ENCODE measurements at regions of chr13 and their contacts with region 1.

Region 1: GRCh38 chr13:52162279-52163101 is 3.1 kb upstream of the NEK3 start:
- DNase-seq: peak; percentile 97
- ATAC-seq: peak; percentile 63
- H3K4me3 ChIP-seq: peak overlapping the region; percentile 8 to 23 (median 16); a peak in 4 of 6 replicates
- H3K27ac ChIP-seq: peak overlapping the region; percentile 91
- H3K4me1 ChIP-seq: peaks cover 78% of the 10 kb centered on the region
- H3K27me3 ChIP-seq: no peaks in the 10 kb centered on the region
- CTCF ChIP-seq: no peak
- EP300 ChIP-seq: peak in 1 of 2 experiments; percentile 84; a peak in 2 of 4 replicates
- POLR2A ChIP-seq: peak in 1 of 2 experiments; percentile 31; a peak in 1 of 4 replicates
- RAD21 ChIP-seq: no peak

Region 2: GRCh38 chr13:51911860-51912510 is 250.5 kb before region 1 on chr13:
- CTCF ChIA-PET with region 1: no interaction called
- POLR2A ChIA-PET with region 1: no interaction called
- in situ Hi-C with region 1: no loop called
- intact Hi-C with region 1: no loop called
- DNase-seq: no peak
- ATAC-seq: no peak
- H3K4me3 ChIP-seq: no peak overlapping the region
- H3K27ac ChIP-seq: no peak overlapping the region
- H3K4me1 ChIP-seq: peaks cover 6% of the 10 kb centered on the region
- H3K27me3 ChIP-seq: no peaks in the 10 kb centered on the region
- CTCF ChIP-seq: no peak
- EP300 ChIP-seq: no peak
- POLR2A ChIP-seq: no peak
- RAD21 ChIP-seq: no peak

Region 3: GRCh38 chr13:51978796-51979556 is 183.5 kb before region 1 on chr13:
- CTCF ChIA-PET with region 1: no interaction called
- POLR2A ChIA-PET with region 1: no interaction called
- in situ Hi-C with region 1: no loop called
- intact Hi-C with region 1: no loop called
- DNase-seq: peak; percentile 90
- ATAC-seq: peak; percentile 97
- H3K4me3 ChIP-seq: peak overlapping the region in 1 of 3 experiments; percentile 14; a peak in 1 of 6 replicates
- H3K27ac ChIP-seq: peak overlapping the region; percentile 55
- H3K4me1 ChIP-seq: peaks cover 75% of the 10 kb centered on the region
- H3K27me3 ChIP-seq: no peaks in the 10 kb centered on the region
- CTCF ChIP-seq: no peak
- EP300 ChIP-seq: peak in 1 of 2 experiments; percentile 42; a peak in 1 of 4 replicates
- POLR2A ChIP-seq: no peak
- RAD21 ChIP-seq: no peak

Region 4: DNA sequence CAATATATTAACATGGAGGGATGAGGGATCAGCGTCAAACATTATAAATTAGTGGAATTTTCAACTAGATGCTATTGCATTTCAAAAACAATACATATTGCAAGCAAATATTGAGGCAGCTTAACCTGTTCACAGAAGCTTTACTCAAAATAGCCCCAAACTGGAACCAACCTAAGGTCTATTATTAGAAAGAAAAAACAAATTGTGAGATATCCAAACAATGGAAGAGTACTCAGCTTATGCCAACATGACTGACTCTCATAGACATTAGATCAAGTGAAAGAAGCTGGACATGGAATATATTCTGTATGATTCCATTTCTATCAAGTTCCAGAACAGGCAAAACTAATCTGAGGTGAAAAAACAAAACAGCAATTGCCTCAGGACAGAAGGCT is 24.5 kb after region 1 on chr13:
- CTCF ChIA-PET with region 1: no interaction called
- POLR2A ChIA-PET with region 1: interaction called, 10 read pairs
- in situ Hi-C with region 1: no loop called
- intact Hi-C with region 1: no loop called
- DNase-seq: no peak
- ATAC-seq: no peak
- H3K4me3 ChIP-seq: no peak overlapping the region
- H3K27ac ChIP-seq: peak overlapping the region; percentile 79
- H3K4me1 ChIP-seq: peaks cover 56% of the 10 kb centered on the region
- H3K27me3 ChIP-seq: no peaks in the 10 kb centered on the region
- CTCF ChIP-seq: no peak
- EP300 ChIP-seq: no peak
- POLR2A ChIP-seq: no peak
- RAD21 ChIP-seq: no peak

Region 5: DNA sequence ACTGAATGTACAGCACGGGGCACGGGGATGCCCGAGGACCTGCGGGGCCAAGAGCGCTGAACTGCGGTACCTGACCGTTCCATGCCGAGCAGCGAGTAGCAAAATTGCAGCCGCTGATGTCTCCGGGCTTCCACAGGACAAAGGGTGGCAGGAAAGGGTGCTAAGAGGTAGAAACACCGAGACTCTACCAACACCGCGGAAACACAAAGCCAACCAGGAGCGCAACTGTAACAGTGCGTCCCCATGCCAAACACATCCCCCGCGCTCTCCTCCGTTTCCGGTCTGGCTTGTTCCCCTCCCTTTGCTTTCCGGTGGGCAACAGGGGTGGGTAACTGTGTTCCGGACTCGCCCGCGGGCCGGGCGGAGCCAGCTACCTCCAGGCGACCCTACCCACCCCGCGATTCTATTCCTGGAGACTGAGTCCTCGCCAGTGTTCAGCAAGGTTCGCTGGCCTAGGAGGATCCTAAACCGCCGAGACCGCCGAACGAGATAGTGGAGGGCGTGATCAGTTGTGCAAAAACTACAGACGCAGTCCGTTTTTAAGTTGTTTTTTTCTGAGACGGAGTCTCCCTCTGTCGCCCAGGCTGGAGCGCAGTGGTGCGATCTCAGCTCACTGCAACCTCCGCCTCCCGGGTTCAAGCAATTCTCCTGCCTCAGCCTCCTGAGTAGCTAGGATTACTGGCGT is 31.8 kb after region 1 on chr13:
- CTCF ChIA-PET with region 1: no interaction called
- POLR2A ChIA-PET with region 1: interaction called, 11 read pairs
- in situ Hi-C with region 1: no loop called
- intact Hi-C with region 1: no loop called
- DNase-seq: peak; percentile 74
- ATAC-seq: peak; percentile 96
- H3K4me3 ChIP-seq: peak overlapping the region; percentile 86 to 94 (median 90)
- H3K27ac ChIP-seq: peak overlapping the region; percentile 79
- H3K4me1 ChIP-seq: peaks cover 40% of the 10 kb centered on the region
- H3K27me3 ChIP-seq: no peaks in the 10 kb centered on the region
- CTCF ChIP-seq: peak; percentile 31
- EP300 ChIP-seq: peak; percentile 35 to 40; a peak in 2 of 4 replicates
- POLR2A ChIP-seq: peak; percentile 85 to 95
- RAD21 ChIP-seq: peak; percentile 62

Region 6: DNA sequence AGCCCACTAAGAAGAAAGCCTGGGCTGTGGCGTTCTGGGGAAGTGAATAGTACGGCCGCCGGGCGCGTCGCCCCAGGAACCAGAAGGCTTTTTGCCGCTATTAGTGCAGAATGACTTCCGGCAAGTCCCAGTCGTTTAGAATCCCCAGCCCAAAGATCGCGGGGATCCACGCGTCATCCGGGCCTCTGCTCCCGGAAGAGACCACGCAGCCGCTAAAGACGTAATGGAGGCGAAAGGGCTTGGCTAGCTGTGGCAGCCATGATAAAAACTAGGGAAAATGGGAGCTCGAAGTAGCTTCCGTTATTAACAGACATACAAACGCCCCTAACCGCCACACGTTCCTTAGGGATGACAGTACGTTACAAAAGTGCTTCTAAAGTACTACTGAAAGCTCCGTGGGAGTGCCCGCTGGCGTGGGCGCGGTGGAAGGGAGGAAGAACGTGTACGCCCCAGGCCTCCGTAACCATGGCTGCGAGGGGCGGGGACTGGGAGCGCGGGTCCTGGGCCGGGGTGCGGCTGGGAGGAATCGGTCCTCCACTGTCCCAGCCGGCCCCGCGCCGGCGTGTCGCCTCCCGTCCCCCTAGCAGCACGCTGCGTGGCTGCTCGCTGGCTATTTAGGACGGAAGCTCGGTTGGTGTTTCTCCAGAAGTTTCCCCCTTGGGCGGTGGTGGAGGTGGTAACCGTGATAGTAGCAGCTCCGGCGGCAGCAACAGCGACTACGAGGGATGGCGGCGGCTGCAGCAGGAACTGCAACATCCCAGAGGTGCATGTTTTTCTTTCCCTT is 489.9 kb after region 1 on chr13 and contains the start of gene SUGT1:
- CTCF ChIA-PET with region 1: no interaction called
- POLR2A ChIA-PET with region 1: no interaction called
- in situ Hi-C with region 1: no loop called
- intact Hi-C with region 1: no loop called
- DNase-seq: peak; percentile 94
- ATAC-seq: peak; percentile 98
- H3K4me3 ChIP-seq: peak within 1 kb of the TSS; percentile 90 to 95 (median 92)
- H3K27ac ChIP-seq: peak within 1 kb of the TSS; percentile 100
- H3K4me1 ChIP-seq: peaks cover 43% of the 10 kb centered on the region
- H3K27me3 ChIP-seq: no peaks in the 10 kb centered on the region; a peak in 1 of 5 replicates
- CTCF ChIP-seq: peak; percentile 70
- EP300 ChIP-seq: no peak
- POLR2A ChIP-seq: peak; percentile 91 to 93
- RAD21 ChIP-seq: no peak; the same call in 1 of the 2 replicates
- total RNA-seq, gene SUGT1: 71.2 and 113 TPM in 2 replicates

Measured in HepG2 (cell line).